ENCODE measurements at regions of chr19 and their contacts with region 1.

Region 1: DNA sequence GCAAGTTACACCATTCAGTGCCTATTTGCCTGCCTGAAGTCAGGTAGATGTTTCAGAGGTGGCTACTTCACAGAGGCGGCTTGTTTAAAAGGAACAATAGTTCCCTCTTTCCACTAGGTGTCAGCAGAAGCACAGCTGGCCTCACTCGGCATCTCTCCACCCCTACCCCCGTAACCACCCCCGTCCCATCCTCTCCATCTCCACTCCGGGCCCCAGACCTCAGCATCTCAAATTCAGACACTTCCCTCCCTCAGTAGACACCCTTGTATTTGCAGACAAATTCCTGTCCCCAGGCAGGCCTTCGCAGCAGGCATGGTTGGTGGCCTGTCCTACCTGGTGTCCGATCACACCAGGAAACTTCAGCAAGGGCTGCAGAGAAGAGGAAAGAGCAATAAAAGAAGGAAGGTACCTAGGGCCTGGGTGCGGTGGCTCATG is 9.1 kb upstream of the DPP9 start:
- DNase-seq: peak; percentile 57 to 68
- ATAC-seq: peak; percentile 90 to 93
- H3K4me3 ChIP-seq: no peak overlapping the region
- H3K27ac ChIP-seq: no peak overlapping the region
- H3K4me1 ChIP-seq: no peaks in the 10 kb centered on the region
- CTCF ChIP-seq: peak; percentile 74
- EP300 ChIP-seq: no peak
- POLR2A ChIP-seq: no peak
- RAD21 ChIP-seq: peak; percentile 83 to 86

Region 2: DNA sequence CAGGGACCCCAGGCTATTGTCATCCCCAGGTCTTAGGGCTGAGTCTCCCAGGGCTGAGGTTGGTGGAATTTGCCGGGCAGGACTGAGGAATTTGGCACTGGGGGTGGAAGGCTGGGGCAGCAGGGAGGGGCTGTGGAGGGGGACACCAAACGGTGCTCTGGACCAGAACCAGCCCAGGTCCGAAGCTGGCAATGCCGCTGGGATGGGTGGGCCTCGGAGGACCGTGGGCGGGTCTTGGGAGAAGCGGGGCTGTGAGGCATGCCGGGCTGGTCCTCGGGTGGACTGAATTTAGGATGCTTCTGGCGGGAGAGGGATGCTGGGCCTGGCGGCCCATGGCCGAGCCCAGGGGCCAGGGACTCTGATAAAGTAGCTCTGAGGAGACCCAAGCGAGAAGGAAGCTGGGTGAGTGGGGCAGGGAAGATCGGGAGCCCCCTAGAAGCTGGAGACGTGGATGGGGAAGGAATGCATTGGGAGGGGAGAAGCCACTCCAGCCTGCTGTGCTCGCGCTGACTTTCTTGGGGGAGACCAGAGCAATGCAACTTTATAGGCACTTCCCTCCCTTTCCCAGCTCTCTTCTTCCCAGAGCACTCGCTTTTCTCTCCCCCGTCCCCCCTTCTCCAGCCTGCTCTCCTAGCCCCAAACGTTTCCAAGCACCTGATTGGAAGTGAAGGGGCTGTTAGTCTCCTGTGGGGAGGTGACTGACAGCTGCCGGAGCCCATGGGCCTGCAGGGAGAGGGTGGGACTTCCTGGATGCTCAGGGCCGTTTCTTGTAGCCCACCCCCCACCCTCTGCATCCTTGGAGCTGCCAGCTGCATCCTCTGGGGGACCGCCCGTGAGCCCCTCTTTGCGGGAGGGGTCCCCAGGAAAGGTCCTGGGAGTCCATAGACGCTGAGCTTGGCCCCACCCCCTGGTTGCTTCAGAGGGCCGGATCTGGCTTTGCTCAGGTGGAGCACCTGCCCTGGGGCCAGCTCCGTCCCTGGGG is 258.3 kb before region 1 on chr19:
- CTCF ChIA-PET with region 1: no interaction called
- POLR2A ChIA-PET with region 1: no interaction called
- DNase-seq: peak in 1 of 2 experiments; percentile 54
- ATAC-seq: peak in 1 of 2 experiments; percentile 43; a peak in 3 of 6 replicates
- H3K4me3 ChIP-seq: peak overlapping the region; percentile 27; the same call in 1 of the 3 replicates
- H3K27ac ChIP-seq: peak overlapping the region in 1 of 2 experiments; percentile 99; a peak in 3 of 6 replicates
- H3K4me1 ChIP-seq: peaks cover 15% of the 10 kb centered on the region
- CTCF ChIP-seq: no peak
- EP300 ChIP-seq: no peak
- POLR2A ChIP-seq: no peak
- RAD21 ChIP-seq: no peak

Region 3: GRCh38 chr19:4524808-4525562 is 207.7 kb before region 1 on chr19:
- CTCF ChIA-PET with region 1: no interaction called
- POLR2A ChIA-PET with region 1: no interaction called
- DNase-seq: peak; percentile 51 to 63
- ATAC-seq: peak; percentile 82 to 84
- H3K4me3 ChIP-seq: no peak overlapping the region
- H3K27ac ChIP-seq: no peak overlapping the region
- H3K4me1 ChIP-seq: peaks cover 5% of the 10 kb centered on the region; the same call in 1 of the 3 replicates
- CTCF ChIP-seq: peak; percentile 54
- EP300 ChIP-seq: no peak
- POLR2A ChIP-seq: no peak
- RAD21 ChIP-seq: peak; percentile 34; a peak in 4 of 5 replicates

Region 4: GRCh38 chr19:4707322-4707721 is 25.4 kb before region 1 on chr19:
- CTCF ChIA-PET with region 1: no interaction called
- POLR2A ChIA-PET with region 1: no interaction called
- DNase-seq: no peak
- ATAC-seq: no peak
- H3K4me3 ChIP-seq: no peak overlapping the region
- H3K27ac ChIP-seq: no peak overlapping the region
- H3K4me1 ChIP-seq: peaks cover 15% of the 10 kb centered on the region; the same call in 2 of the 3 replicates
- CTCF ChIP-seq: no peak
- EP300 ChIP-seq: no peak
- POLR2A ChIP-seq: no peak
- RAD21 ChIP-seq: no peak

Region 5: GRCh38 chr19:4763021-4763420 is 30.3 kb after region 1 on chr19:
- CTCF ChIA-PET with region 1: interaction called, 14 read pairs
- POLR2A ChIA-PET with region 1: no interaction called
- DNase-seq: no peak
- ATAC-seq: no peak
- H3K4me3 ChIP-seq: no peak overlapping the region
- H3K27ac ChIP-seq: no peak overlapping the region
- H3K4me1 ChIP-seq: peaks cover 7% of the 10 kb centered on the region; the same call in 1 of the 3 replicates
- CTCF ChIP-seq: no peak
- EP300 ChIP-seq: no peak
- POLR2A ChIP-seq: no peak
- RAD21 ChIP-seq: no peak

Region 6: DNA sequence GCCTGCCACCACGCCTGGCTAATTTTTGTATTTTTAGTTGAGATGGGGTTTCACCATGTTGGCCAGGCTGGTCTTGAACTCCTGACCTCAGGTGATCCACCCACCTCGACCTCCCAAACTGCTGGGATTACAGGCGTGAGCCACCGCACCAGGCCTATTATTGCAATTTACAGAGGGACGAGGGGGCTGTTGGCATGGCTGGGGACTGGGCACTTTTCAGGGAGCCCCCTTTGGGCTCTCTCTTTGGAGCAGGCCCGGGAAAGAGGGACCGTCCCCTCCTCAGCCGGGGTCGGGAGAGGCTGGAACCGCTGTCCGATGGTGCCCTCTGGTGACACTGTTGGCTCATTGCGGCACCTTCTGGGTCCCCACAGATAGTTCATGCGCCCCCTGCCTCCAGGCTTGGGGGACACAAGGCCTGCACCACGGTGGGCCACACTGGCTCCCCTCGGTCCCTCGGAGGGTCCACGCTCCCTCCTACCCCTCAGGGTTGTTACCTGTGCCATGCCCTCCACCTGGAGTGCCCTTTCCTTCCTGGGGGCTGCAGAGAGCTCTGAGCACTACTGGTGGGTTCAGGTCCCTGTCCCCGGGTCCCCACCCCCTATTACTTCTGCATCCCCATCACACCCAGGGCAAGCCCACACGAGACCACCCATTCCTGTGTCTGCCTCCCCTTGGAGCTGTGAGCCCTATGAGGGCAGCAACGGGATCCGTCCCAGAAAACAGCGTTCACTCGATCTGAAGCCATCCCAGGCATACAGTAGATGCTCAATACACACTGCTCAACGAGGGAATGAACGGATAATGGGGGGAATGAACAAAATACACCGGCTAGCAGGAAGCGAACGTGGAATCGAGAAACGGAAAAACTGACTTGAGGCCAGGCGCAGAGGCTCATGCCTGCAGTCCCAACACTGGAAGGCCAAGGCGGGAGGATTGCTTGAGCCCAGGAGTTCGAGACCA is 71.3 kb after region 1 on chr19:
- CTCF ChIA-PET with region 1: interaction called, 14 read pairs
- POLR2A ChIA-PET with region 1: no interaction called
- DNase-seq: peak; percentile 47 to 52
- ATAC-seq: peak; percentile 88 to 93
- H3K4me3 ChIP-seq: no peak overlapping the region
- H3K27ac ChIP-seq: no peak overlapping the region
- H3K4me1 ChIP-seq: no peaks in the 10 kb centered on the region
- CTCF ChIP-seq: peak; percentile 67
- EP300 ChIP-seq: no peak
- POLR2A ChIP-seq: no peak
- RAD21 ChIP-seq: peak; percentile 69 to 80

Region 7: DNA sequence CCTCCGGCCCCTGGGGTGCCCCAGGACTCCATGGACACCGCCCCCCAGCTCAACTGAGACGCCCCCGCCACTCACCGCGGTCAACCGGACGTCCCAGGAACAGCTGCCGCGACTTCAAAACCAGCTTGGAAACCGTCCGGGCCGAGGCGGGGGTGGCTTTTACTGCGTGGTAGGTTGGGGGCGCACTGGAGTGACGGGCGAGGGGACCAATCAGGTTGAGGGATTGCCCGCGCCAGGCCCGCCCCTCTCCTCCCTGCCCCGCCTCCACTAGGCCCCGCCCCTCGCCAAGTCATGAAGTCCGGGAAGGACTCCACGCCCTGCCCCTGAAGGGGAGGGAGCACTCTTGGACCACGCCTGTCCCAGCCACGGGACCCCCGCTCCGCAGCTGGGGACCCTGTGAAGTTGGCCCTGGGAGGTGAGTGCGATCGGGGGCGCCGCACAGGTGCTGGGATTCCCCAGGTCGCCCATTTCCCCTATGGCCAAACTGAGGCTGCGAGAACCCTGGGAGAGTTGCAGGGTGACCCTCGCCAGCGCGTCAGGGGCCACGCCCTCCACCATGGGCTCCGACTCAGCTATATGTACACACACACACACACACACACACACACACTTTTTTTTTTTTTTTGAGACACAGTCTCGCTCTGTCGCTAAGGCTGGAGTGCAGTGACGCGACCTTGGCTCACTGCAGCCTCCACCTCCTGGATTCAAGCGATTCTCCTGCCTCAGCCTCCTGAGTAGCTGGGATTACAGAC is 135.0 kb after region 1 on chr19 and contains the start of gene PLIN3:
- CTCF ChIA-PET with region 1: no interaction called
- POLR2A ChIA-PET with region 1: no interaction called
- DNase-seq: peak; percentile 93 to 96
- ATAC-seq: peak; percentile 84 to 88
- H3K4me3 ChIP-seq: peak within 1 kb of the TSS; percentile 97
- H3K27ac ChIP-seq: peak within 1 kb of the TSS; percentile 90 to 94
- H3K4me1 ChIP-seq: peaks cover 37% of the 10 kb centered on the region
- CTCF ChIP-seq: no peak
- EP300 ChIP-seq: no peak
- POLR2A ChIP-seq: peak; percentile 25; the same call in 1 of the 2 replicates
- RAD21 ChIP-seq: no peak
- polyA plus RNA-seq, gene PLIN3: 28.4 and 30.1 TPM in 2 replicates